H1 (cell line): ENCODE measurements at regions of chr6 and their contacts with region 1.

Region 1: GRCh38 chr6:76565932-76566331 is 493.5 kb upstream of the IMPG1 start:
- DNase-seq: no peak
- H3K4me3 ChIP-seq: peak overlapping the region in 1 of 4 experiments; percentile 95; a peak in 1 of 8 replicates
- H3K27ac ChIP-seq: no peak overlapping the region
- H3K4me1 ChIP-seq: peaks cover 0 to 3% (median 0%) of the 10 kb centered on the region in 4 experiments; a peak in 2 of 7 replicates
- H3K27me3 ChIP-seq: no peaks in the 10 kb centered on the region
- CTCF ChIP-seq: no peak
- EP300 ChIP-seq: no peak
- POLR2A ChIP-seq: peak in 1 of 2 experiments; percentile 71; a peak in 2 of 3 replicates
- RAD21 ChIP-seq: no peak

Region 2: DNA sequence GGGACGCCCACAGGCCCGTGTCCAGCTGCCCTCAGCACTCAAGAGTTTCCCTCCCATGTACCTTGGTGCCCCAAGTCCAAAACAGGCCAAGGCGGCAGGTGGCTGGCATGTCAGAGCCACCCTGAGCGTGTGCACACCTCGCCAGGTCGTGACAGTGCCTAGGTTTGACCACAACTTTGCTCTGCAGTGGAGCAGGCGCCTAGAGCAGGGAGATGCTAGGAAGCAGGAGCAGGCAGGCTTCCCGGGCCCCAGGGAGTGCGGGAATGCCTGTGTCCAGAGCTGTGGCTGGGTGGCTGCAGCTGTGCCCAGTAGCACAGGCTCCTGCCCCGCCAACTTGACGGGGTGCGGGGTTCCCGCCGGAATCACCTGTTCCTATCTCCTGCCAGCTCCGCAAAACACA is 112.7 kb before region 1 on chr6:
- CTCF ChIA-PET with region 1: no interaction called
- POLR2A ChIA-PET with region 1: no interaction called
- DNase-seq: no peak
- H3K4me3 ChIP-seq: no peak overlapping the region
- H3K27ac ChIP-seq: no peak overlapping the region
- H3K4me1 ChIP-seq: no peaks in the 10 kb centered on the region
- H3K27me3 ChIP-seq: no peaks in the 10 kb centered on the region
- CTCF ChIP-seq: no peak
- EP300 ChIP-seq: no peak
- POLR2A ChIP-seq: no peak
- RAD21 ChIP-seq: no peak

Region 3: DNA sequence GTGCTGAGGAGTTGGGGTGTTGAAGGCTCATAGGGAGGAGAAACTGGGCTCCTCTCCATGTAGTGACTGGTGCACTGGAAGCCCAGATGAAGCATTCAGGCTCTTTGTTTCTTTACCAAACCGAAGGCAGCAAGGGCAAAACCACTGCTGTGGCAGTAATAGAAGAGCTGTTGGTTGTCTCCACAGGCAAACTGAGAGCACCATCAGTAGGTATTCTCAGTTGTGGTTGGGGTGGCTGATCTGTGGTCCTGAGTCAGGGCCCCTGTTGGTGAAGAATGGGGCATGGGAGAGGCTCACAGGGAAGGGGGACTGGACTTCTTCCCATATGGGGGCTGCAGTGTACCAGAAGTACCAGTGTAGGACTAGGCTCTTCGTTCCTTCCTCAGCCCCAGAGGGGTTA is 33.3 kb before region 1 on chr6:
- CTCF ChIA-PET with region 1: no interaction called
- POLR2A ChIA-PET with region 1: no interaction called
- DNase-seq: no peak
- H3K4me3 ChIP-seq: no peak overlapping the region
- H3K27ac ChIP-seq: no peak overlapping the region
- H3K4me1 ChIP-seq: no peaks in the 10 kb centered on the region
- H3K27me3 ChIP-seq: no peaks in the 10 kb centered on the region
- CTCF ChIP-seq: no peak
- EP300 ChIP-seq: no peak
- POLR2A ChIP-seq: no peak
- RAD21 ChIP-seq: no peak

Region 4: GRCh38 chr6:76552268-76552667 is 13.7 kb before region 1 on chr6:
- CTCF ChIA-PET with region 1: no interaction called
- POLR2A ChIA-PET with region 1: interaction called, 27 read pairs
- DNase-seq: no peak
- H3K4me3 ChIP-seq: no peak overlapping the region
- H3K27ac ChIP-seq: no peak overlapping the region
- H3K4me1 ChIP-seq: peaks cover 0 to 8% (median 0%) of the 10 kb centered on the region in 4 experiments; a peak in 1 of 7 replicates
- H3K27me3 ChIP-seq: no peaks in the 10 kb centered on the region
- CTCF ChIP-seq: no peak
- EP300 ChIP-seq: no peak
- POLR2A ChIP-seq: no peak
- RAD21 ChIP-seq: no peak

Region 5: GRCh38 chr6:76578746-76579145 is 12.8 kb after region 1 on chr6:
- CTCF ChIA-PET with region 1: no interaction called
- POLR2A ChIA-PET with region 1: interaction called, 44 read pairs
- DNase-seq: no peak
- H3K4me3 ChIP-seq: no peak overlapping the region
- H3K27ac ChIP-seq: no peak overlapping the region
- H3K4me1 ChIP-seq: no peaks in the 10 kb centered on the region; a peak in 2 of 7 replicates
- H3K27me3 ChIP-seq: no peaks in the 10 kb centered on the region
- CTCF ChIP-seq: no peak
- EP300 ChIP-seq: no peak
- POLR2A ChIP-seq: no peak
- RAD21 ChIP-seq: no peak